Activated CD4-positive, alpha-beta T cell treated with anti-CD3 and anti-CD28 coated beads for 36 hours (primary cell): ENCODE measurements at regions of chr10 and their contacts with region 1.

Region 1: GRCh38 chr10:93482145-93482834 is at the start of gene MYOF:
- DNase-seq: peak; percentile 68
- ATAC-seq: peak; percentile 79
- H3K4me3 Mint-ChIP-seq: peak within 1 kb of the TSS; percentile 97
- H3K27ac Mint-ChIP-seq: peak within 1 kb of the TSS; percentile 99
- H3K4me1 Mint-ChIP-seq: peaks cover 24% of the 10 kb centered on the region
- H3K27me3 Mint-ChIP-seq: peaks cover 9% of the 10 kb centered on the region
- total RNA-seq, gene MYOF: 37.8 to 40.0 TPM

Region 2: DNA sequence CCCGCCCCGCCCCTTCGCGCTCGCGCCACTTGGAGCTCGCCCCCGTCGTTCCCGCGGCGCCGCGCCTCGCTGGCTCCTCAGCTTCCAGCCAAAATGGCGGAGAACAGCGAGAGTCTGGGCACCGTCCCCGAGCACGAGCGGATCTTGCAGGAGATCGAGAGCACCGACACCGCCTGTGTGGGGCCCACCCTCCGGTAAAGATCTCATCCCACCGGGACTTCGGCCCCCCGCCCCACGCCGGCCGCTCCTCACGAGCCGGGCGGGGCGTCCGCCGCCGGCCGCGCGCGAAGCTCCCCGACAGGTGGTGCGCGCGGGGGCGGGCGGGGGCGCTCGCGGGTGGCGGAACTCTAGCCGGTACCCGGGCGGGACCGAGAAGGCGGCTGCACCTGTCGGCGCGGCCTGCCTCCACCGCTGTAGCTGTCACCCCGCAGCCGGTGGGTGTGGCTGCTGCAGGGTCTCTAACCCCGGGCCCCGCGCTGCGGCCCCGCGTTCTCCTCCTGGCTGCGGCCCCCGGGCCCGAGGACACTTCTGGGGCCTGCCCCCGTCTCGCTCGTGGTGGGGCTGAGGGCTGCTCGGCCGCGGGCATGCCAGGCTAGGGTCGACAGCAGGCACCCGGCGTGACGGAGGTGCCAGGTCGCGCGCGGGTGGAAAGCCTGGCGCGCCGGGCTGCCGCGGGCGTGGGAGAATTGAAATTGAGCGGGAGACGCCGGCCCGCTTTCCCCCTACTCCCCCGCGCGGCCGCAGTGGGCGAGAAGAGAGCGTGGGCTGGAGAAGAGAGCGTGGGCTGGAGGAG is 633.7 kb before region 1 on chr10 and contains the start of gene EXOC6:
- CTCF ChIA-PET with region 1: no interaction called
- POLR2A ChIA-PET with region 1: no interaction called
- intact Hi-C with region 1: loop called in 1 of 2 experiments (anchors 5 kb)
- DNase-seq: peak; percentile 92
- ATAC-seq: peak; percentile 78
- H3K4me3 Mint-ChIP-seq: peak within 1 kb of the TSS; percentile 79
- H3K27ac Mint-ChIP-seq: peak within 1 kb of the TSS; percentile 90
- H3K4me1 Mint-ChIP-seq: peaks cover 33% of the 10 kb centered on the region
- H3K27me3 Mint-ChIP-seq: no peaks in the 10 kb centered on the region
- total RNA-seq, gene EXOC6: 9.7 to 12.1 TPM

Region 3: GRCh38 chr10:93352638-93353383 is 129.5 kb before region 1 on chr10:
- CTCF ChIA-PET with region 1: interaction called, 35 read pairs
- POLR2A ChIA-PET with region 1: no interaction called
- intact Hi-C with region 1: no loop called
- DNase-seq: no peak
- ATAC-seq: no peak
- H3K4me3 Mint-ChIP-seq: no peak overlapping the region
- H3K27ac Mint-ChIP-seq: no peak overlapping the region
- H3K4me1 Mint-ChIP-seq: peaks cover 3% of the 10 kb centered on the region
- H3K27me3 Mint-ChIP-seq: peaks cover 4% of the 10 kb centered on the region

Region 4: DNA sequence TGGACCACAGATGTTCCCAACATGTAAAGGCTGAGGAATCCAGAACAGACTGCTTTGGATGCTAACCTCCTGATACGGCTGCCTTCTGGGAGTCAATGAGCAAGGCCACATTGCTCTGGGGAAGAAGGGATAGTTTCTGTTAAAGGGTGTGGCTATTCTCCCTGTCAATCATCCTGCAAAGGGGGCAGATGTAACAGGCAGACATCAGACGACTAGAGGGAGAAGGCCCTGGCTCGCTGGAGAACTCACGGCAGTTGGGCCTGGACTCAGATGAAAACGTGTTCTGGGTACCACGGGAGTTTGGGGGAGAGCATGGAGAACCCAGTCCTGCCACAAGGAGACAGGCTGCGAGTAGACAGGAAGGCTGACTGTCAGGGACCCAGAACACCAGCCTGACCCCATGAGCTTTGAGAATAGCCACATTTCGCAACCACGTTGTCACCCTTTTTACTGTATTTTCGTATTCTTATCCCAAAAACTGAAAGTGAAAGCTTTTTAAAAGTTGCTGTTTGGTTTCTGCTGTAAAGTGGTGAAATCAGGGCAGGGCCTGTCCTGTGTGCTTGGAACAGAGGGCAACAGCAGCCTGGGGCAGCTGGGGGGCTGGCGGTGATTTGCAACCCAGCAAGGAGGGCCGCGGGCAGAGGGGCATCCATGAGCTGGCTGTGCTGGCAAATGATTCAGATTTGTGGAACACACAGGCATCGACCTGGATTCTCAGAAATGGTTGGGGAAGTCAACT is 95.5 kb before region 1 on chr10:
- CTCF ChIA-PET with region 1: interaction called, 378 read pairs
- POLR2A ChIA-PET with region 1: no interaction called
- intact Hi-C with region 1: no loop called
- DNase-seq: peak; percentile 19
- ATAC-seq: peak; percentile 69
- H3K4me3 Mint-ChIP-seq: no peak overlapping the region
- H3K27ac Mint-ChIP-seq: peak overlapping the region; percentile 55
- H3K4me1 Mint-ChIP-seq: peaks cover 29% of the 10 kb centered on the region
- H3K27me3 Mint-ChIP-seq: no peaks in the 10 kb centered on the region

Region 5: GRCh38 chr10:93471110-93471651 is 11.1 kb before region 1 on chr10:
- CTCF ChIA-PET with region 1: interaction called, 33 read pairs
- POLR2A ChIA-PET with region 1: no interaction called
- intact Hi-C with region 1: loop called in 1 of 2 experiments (anchors 1 kb)
- DNase-seq: no peak
- ATAC-seq: peak; percentile 93
- H3K4me3 Mint-ChIP-seq: no peak overlapping the region
- H3K27ac Mint-ChIP-seq: peak overlapping the region; percentile 39
- H3K4me1 Mint-ChIP-seq: peaks cover 19% of the 10 kb centered on the region
- H3K27me3 Mint-ChIP-seq: no peaks in the 10 kb centered on the region

Region 6: DNA sequence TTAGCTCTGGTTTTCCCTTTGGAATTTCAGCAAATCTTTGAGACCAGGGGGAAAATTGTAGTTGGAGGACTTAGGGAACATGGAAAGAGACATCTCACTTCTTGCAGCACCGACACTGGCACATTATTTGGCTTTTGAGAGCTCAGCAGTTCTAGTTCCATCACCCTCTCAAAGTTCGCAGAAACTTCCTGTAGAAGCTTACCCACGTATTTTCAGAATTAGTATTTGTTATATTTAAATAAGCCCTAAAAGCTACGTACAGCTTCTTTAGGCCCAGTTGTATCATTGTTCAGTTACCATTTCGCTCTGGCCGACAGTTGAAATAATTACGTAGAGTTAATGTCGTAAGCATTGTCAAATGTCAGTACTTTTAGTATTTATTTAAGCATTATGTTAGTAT is 27.5 kb after region 1 on chr10:
- CTCF ChIA-PET with region 1: interaction called, 71 read pairs
- POLR2A ChIA-PET with region 1: interaction called, 4 read pairs
- intact Hi-C with region 1: loop called (anchors 1 to 2 kb)
- DNase-seq: no peak
- ATAC-seq: peak; percentile 42
- H3K4me3 Mint-ChIP-seq: no peak overlapping the region
- H3K27ac Mint-ChIP-seq: no peak overlapping the region
- H3K4me1 Mint-ChIP-seq: peaks cover 29% of the 10 kb centered on the region
- H3K27me3 Mint-ChIP-seq: no peaks in the 10 kb centered on the region

Region 7: GRCh38 chr10:95097805-95098204 is 1615.5 kb after region 1 on chr10:
- CTCF ChIA-PET with region 1: no interaction called
- POLR2A ChIA-PET with region 1: no interaction called
- intact Hi-C with region 1: no loop called
- DNase-seq: no peak
- ATAC-seq: no peak
- H3K4me3 Mint-ChIP-seq: no peak overlapping the region
- H3K27ac Mint-ChIP-seq: no peak overlapping the region
- H3K4me1 Mint-ChIP-seq: no peaks in the 10 kb centered on the region
- H3K27me3 Mint-ChIP-seq: no peaks in the 10 kb centered on the region